ENCODE measurements at regions of chr3 and their contacts with region 1.

Region 1: GRCh38 chr3:107429320-107430181 is 52.3 kb downstream of the CCDC54 start:
- DNase-seq: peak; percentile 52 to 92
- H3K4me3 ChIP-seq: no peak overlapping the region
- CTCF ChIP-seq: no peak
- POLR2A ChIP-seq: no peak

Region 2: GRCh38 chr3:107235928-107236315 is 193.6 kb before region 1 on chr3:
- intact Hi-C with region 1: loop called (anchors 10 kb)
- DNase-seq: peak in 1 of 2 donors; percentile 28
- H3K4me3 ChIP-seq: peak overlapping the region; percentile 28
- CTCF ChIP-seq: peak in 1 of 3 donors; percentile 53
- POLR2A ChIP-seq: no peak

Region 3: GRCh38 chr3:107271787-107272387 is 157.7 kb before region 1 on chr3:
- intact Hi-C with region 1: loop called (anchors 10 kb)
- DNase-seq: no peak
- H3K4me3 ChIP-seq: no peak overlapping the region
- CTCF ChIP-seq: no peak
- POLR2A ChIP-seq: no peak

Region 4: GRCh38 chr3:107455621-107456020 is 26.1 kb after region 1 on chr3:
- intact Hi-C with region 1: loop called (anchors 2 kb)
- DNase-seq: no peak
- H3K4me3 ChIP-seq: no peak overlapping the region
- CTCF ChIP-seq: no peak
- POLR2A ChIP-seq: no peak

Region 5: GRCh38 chr3:107545680-107546120 is 116.1 kb after region 1 on chr3:
- intact Hi-C with region 1: no loop called
- DNase-seq: no peak
- H3K4me3 ChIP-seq: no peak overlapping the region
- CTCF ChIP-seq: no peak
- POLR2A ChIP-seq: no peak